Esophagus squamous epithelium (tissue), 5 donors: ENCODE measurements at regions of chr5 and their contacts with region 1.

Region 1: DNA sequence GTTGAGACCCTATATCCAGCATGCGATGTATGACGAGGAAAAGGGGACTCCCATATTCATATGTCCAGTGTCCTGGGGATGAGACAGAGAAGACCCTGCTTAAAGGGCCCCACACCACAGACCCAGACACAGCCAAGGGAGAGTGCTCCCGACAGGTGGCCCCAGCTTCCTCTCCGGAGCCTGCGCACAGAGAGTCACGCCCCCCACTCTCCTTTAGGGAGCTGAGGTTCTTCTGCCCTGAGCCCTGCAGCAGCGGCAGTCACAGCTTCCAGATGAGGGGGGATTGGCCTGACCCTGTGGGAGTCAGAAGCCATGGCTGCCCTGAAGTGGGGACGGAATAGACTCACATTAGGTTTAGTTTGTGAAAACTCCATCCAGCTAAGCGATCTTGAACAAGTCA is 17.1 kb downstream of the BTNL3 start:
- DNase-seq: no peak
- H3K4me3 ChIP-seq: no peak overlapping the region
- H3K27ac ChIP-seq: no peak overlapping the region
- H3K4me1 ChIP-seq: no peaks in the 10 kb centered on the region
- H3K27me3 ChIP-seq: peaks cover 0 to 32% (median 0%) of the 10 kb centered on the region in 4 donors
- CTCF ChIP-seq: no peak
- POLR2A ChIP-seq: no peak

Region 2: GRCh38 chr5:180950291-180950949 is 55.4 kb before region 1 on chr5:
- intact Hi-C with region 1: loop called (anchors 2 kb)
- DNase-seq: no peak
- H3K4me3 ChIP-seq: no peak overlapping the region
- H3K27ac ChIP-seq: no peak overlapping the region
- H3K4me1 ChIP-seq: no peaks in the 10 kb centered on the region
- H3K27me3 ChIP-seq: no peaks in the 10 kb centered on the region
- CTCF ChIP-seq: no peak
- POLR2A ChIP-seq: no peak